Mammary epithelial cell (primary cell): ENCODE measurements at regions of chr11 and their contacts with region 1.

Region 1: DNA sequence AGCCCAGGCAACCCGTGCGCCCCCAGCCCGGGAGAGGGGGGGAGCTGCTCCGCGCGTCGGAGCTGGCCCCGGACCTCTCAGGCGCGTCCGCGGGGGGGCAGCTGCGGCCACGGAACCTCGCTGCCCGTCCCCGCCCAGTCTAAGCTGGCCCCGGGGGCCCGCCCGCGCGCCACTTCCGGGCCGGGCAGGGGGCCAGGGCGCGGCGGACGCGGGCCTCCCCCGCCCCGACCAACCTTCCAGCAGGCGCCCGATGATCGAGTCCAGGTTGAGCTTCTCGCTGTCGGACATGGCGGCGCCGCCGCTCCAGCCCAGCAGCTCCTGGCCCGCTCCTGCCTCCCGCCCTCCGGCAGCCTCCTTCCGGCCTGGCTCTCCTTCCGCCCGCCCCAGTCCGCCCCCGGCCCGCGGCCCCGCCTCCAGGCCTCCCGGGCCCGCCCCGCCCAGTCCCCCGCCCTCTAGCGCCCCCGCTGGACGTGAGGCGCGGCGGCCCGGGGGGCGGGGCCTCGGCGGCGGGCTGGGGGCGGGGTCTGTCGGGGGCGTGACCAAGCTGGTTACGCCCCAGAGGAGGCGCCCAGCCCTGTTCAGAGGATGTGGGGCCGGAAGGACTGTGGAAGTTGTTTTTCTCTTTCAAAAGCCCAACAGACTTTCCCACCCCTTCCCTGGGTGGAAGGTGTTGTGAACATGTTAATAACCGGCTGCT is at the start of gene PPP1CA:
- DNase-seq: peak; percentile 81
- H3K4me3 ChIP-seq: peak within 1 kb of the TSS; percentile 85 to 95 (median 89)
- H3K27ac ChIP-seq: peak within 1 kb of the TSS; percentile 58
- H3K4me1 ChIP-seq: peaks cover 17% of the 10 kb centered on the region
- H3K27me3 ChIP-seq: no peaks in the 10 kb centered on the region
- CTCF ChIP-seq: peak in 1 of 2 donors; percentile 29
- total RNA-seq, gene PPP1CA: 178 to 182 TPM

Region 2: DNA sequence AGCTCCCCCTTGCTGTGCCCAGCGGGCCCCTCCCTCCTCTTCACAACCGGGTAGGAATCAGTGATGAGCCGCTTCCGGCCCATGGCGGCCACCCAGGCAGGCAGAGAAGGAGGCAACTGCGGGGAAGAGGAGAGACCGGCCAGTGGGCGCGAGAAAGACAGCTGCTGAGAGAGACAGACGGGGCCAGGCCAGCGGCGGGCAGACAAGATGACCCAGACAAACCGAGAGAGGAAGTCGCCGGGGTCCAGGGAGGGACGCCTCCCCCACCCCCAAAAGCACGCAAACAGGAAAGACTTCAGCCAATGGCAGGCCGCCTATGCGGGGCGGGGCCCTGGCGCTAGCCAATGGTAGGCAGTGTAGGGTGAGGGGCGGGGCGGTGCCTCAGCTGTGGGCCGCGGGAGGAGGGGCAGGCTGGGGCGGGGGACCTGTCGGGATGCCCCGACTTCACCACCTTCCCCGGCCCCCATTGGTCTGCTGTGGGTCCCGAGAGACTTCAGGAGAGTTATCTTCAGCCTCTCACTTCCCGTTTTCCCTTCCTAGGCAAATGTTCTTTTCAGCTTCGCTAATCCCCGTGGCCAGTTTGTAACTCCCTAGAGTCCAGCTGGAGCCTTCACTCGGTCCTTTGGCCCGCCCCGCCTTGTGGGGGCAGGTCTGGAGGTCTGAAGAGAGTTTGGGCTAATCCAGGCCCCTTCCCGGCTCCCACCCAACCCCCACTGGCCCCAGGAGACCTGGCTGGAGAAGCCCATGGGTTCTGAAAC is 48.1 kb before region 1 on chr11 and contains the start of gene POLD4:
- CTCF ChIA-PET with region 1: no interaction called
- dilution Hi-C with region 1: no loop called
- in situ Hi-C with region 1: no loop called
- intact Hi-C with region 1: no loop called
- DNase-seq: peak; percentile 87
- H3K4me3 ChIP-seq: peak within 1 kb of the TSS; percentile 59 to 90 (median 73)
- H3K27ac ChIP-seq: peak within 1 kb of the TSS; percentile 78
- H3K4me1 ChIP-seq: peaks cover 62% of the 10 kb centered on the region
- H3K27me3 ChIP-seq: no peaks in the 10 kb centered on the region
- CTCF ChIP-seq: no peak
- total RNA-seq, gene POLD4: 39.2 to 75.2 TPM

Region 3: DNA sequence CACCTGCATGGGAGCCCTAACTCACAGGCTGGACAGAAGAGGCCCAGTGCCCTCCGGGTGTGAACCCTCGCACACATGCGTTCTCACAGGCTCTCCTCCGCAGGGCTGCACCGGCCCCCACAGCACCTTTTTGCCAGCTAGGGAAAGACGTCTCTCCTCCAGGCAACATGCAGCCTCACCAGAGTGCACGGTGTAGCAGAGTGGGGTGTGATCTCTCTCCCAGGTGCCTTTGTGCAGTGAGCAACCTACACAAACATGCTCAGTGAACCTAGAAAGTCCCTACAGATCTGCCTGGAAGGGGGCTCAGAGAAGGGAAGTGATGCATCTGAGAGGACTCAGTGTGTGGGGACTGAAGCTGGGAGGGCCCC is 10.1 kb after region 1 on chr11:
- CTCF ChIA-PET with region 1: no interaction called
- dilution Hi-C with region 1: no loop called
- in situ Hi-C with region 1: no loop called
- intact Hi-C with region 1: loop called (anchors 1 kb)
- DNase-seq: no peak
- H3K4me3 ChIP-seq: no peak overlapping the region
- H3K27ac ChIP-seq: no peak overlapping the region
- H3K4me1 ChIP-seq: no peaks in the 10 kb centered on the region
- H3K27me3 ChIP-seq: no peaks in the 10 kb centered on the region
- CTCF ChIP-seq: no peak

Region 4: GRCh38 chr11:67428052-67428914 is 26.6 kb after region 1 on chr11 and contains the start of gene RPS6KB2:
- CTCF ChIA-PET with region 1: no interaction called
- dilution Hi-C with region 1: no loop called
- in situ Hi-C with region 1: no loop called
- intact Hi-C with region 1: loop called (anchors 2 kb)
- DNase-seq: peak; percentile 95
- H3K4me3 ChIP-seq: peak within 1 kb of the TSS; percentile 62 to 72 (median 71)
- H3K27ac ChIP-seq: peak within 1 kb of the TSS; percentile 58
- H3K4me1 ChIP-seq: peaks cover 12% of the 10 kb centered on the region
- H3K27me3 ChIP-seq: no peaks in the 10 kb centered on the region
- CTCF ChIP-seq: no peak
- total RNA-seq, gene RPS6KB2: 35.7 to 62.3 TPM

Region 5: DNA sequence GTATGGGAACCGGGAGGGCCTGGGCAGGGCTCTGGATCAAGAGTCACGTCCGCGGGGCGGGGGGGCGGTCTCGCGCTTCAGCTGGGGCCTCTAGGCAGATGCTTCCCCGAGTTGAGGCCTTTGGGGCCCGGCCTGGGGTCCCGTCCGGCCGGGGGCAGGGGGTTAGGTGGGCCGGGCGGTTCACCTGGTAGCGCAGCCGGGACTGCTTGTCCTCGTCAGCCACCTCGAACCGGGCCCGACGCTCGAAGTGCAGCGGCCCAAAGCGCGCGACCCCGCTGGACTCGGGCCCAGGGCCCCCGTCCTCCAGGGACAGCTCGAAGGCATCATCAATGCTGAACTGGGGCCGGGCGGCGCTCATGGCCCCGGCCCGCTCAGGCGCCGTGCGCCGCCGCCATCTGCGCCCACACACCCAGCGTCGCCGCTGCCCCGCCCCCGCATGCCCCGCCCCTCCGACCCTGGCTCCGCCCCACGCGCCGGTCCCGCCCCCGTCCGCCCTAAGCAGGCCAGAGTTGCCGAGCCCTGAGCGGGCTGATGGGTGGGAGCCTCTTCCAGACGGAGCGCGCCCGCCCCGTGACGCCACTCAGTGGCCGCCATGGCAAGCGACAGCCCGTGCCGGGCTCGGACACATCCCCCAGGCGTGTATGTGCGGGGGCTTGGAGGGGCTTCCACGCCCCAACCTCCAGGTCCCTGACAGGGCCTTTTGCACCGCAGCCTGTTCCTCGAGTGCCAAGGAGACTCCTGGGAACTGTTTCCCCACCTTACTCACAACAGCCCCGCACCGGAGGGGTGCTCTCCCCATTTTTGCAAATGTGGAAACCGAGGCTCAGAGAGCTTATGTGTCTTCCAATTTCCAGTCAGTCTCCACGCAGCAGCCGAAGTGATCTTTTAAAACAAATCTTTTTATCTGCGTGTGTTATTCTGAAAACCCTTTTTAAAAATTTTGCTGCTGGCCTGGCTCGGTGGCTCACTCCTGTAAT is 67.5 kb after region 1 on chr11 and contains the start of gene TMEM134:
- CTCF ChIA-PET with region 1: interaction called, 4 read pairs
- dilution Hi-C with region 1: no loop called
- in situ Hi-C with region 1: no loop called
- intact Hi-C with region 1: loop called (anchors 2 kb)
- DNase-seq: peak; percentile 80
- H3K4me3 ChIP-seq: peak within 1 kb of the TSS; percentile 86 to 95 (median 92)
- H3K27ac ChIP-seq: peak within 1 kb of the TSS; percentile 71
- H3K4me1 ChIP-seq: peaks cover 20% of the 10 kb centered on the region
- H3K27me3 ChIP-seq: no peaks in the 10 kb centered on the region
- CTCF ChIP-seq: peak; percentile 24 to 53
- total RNA-seq, gene TMEM134: 55.3 to 69.4 TPM

Region 6: DNA sequence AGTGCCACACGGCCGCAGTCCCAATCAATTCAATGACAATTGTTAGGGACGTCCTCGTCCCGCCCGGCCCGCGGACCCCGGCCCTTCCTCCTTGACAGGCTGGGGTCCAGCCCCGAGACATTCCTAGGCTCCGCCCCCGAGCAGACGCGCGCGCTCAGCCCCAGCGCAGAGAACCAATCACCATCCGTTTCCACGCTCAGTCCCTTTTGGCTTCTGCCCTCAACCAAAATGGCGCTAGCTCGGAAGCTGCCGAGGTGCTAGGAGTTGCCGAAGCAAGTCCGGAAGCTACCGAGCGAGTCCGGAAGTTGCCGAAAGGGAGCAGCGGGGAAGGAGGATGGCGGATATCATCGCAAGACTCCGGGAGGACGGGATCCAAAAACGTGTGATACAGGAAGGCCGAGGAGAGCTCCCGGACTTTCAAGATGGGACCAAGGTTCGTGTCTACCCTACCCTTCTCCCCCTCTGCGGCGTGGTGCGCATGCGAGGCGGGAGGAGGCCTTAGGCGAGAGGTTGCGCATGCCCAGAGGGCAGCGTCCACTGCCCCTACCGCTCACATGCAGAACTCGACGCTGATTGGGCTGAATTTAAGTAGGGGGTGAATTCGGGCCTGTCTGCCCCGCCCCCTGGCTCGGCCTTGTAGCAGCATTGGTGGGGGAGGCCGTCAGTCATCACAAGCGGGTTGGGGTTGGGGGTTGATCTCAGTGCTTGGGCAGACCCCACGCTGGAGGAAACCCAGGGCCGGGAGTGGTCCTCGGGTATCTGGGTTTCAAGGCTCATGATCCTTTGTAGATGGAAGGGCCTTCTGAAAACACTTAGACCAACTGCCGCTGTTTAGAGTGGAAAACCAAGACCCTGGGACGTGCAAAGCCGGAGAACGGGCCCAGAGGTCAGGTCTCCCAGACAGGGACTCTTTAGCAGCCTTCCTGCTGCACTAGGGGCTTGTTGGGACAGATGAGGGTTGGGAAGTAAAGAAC is 81.5 kb after region 1 on chr11 and contains the start of gene AIP:
- CTCF ChIA-PET with region 1: interaction called, 4 read pairs
- dilution Hi-C with region 1: no loop called
- in situ Hi-C with region 1: no loop called
- intact Hi-C with region 1: loop called (anchors 5 kb)
- DNase-seq: peak; percentile 96
- H3K4me3 ChIP-seq: peak within 1 kb of the TSS; percentile 56 to 78 (median 73)
- H3K27ac ChIP-seq: peak within 1 kb of the TSS; percentile 66
- H3K4me1 ChIP-seq: peaks cover 12% of the 10 kb centered on the region
- H3K27me3 ChIP-seq: no peaks in the 10 kb centered on the region
- CTCF ChIP-seq: peak; percentile 5 to 34
- total RNA-seq, gene AIP: 34.5 to 36.2 TPM

Region 7: DNA sequence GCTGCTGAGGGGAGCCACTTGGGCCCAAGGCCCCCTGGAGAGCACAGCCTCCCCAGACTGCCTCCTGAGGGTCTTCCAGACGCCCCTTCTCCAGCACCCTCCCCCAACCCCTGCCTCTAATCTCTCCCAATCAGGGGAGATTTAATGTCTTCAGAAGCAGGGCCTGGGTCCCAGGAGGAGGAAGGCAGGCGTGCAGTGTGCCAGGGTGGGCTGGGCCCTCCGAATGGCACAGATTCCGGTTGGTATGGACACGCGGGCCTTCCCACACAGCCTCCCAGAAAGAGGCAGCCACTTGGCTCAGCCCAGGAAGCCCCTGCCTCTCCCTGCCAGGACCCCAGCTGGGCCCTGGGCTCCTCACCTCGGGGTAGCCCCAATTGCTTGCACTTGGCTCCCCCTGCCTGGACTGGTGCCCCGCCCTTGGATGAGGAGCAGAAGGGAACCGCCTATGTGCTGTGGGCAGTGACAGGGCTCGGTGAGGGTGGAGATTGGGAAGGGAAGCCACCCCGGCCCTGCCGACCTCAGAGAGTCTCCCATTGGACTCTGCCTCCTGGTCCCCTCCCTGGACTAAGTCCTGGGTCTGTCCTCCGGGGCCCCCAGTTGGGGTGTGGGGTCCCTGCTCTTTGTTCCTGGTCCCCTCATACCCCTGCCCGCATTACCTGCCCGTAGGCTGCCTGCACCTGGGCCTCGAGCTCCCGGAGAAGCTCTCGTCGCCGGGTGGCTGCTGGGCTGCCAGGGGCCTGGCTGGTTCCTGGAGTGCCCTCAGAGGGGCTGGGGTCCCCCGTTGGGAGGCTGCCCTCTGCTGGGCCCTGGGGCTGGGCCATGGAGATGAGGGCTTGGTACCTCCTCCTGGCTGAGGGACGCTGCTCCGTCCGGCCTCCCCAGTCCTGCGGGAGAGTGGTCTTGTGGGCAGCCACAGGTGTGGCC is 122.2 kb after region 1 on chr11:
- CTCF ChIA-PET with region 1: no interaction called
- dilution Hi-C with region 1: no loop called
- in situ Hi-C with region 1: no loop called
- intact Hi-C with region 1: no loop called
- DNase-seq: no peak
- H3K4me3 ChIP-seq: no peak overlapping the region
- H3K27ac ChIP-seq: no peak overlapping the region
- H3K4me1 ChIP-seq: no peaks in the 10 kb centered on the region
- H3K27me3 ChIP-seq: no peaks in the 10 kb centered on the region
- CTCF ChIP-seq: no peak

Region 8: DNA sequence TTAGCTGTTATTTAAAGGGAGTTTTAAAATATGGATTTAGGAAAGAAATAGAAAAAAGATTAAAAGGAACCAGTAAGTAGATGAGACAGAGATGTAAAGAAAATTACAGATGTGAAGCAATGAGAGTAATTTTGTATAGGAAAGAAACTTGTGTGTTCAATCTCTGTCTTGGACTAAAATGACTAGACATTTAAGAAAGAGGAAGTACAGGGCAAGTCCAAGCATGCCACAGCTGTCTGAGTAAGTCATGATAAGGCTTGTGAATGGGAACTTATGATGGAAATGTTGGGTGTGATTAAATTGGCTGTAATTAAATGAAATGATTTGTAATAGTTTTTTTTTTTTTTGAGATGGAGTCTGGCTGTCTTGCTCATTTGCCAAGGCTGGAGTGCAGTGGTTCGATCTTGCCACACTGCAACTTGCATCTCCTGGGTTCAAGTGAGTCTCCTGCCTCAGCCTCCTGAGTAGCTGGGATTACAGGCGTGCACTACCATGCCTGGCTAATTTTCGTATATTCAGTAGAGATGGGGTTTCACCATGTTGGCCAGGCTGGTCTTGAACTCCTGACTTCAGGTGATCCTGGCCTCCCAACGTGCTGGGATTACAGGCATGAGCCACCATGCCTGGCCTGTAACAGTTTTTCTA is 254.8 kb after region 1 on chr11:
- CTCF ChIA-PET with region 1: interaction called, 20 read pairs
- dilution Hi-C with region 1: no loop called
- in situ Hi-C with region 1: no loop called
- intact Hi-C with region 1: no loop called
- DNase-seq: peak; percentile 83
- H3K4me3 ChIP-seq: no peak overlapping the region
- H3K27ac ChIP-seq: peak overlapping the region; percentile 71
- H3K4me1 ChIP-seq: peaks cover 29% of the 10 kb centered on the region
- H3K27me3 ChIP-seq: no peaks in the 10 kb centered on the region
- CTCF ChIP-seq: no peak

Region 9: DNA sequence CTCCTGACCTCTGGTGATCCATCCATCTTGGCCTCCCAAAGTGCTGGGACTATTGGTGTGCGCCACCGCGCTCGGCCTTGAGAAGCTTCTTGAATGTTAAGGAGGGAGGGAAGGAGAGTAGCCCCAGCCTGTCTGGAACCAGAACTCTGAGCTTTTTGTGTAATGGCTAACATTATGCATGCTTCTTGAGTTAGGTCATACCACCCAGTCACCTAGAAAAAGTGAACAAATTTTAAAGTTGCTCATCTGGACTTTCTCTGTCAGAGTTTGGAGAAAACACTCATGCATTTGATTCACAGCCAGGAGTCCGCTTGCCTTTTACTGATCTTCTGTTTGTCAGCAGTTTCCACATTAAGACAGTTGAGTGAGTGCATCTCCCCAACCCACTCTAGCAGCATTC is 1141.0 kb after region 1 on chr11:
- CTCF ChIA-PET with region 1: no interaction called
- dilution Hi-C with region 1: no loop called
- in situ Hi-C with region 1: no loop called
- intact Hi-C with region 1: no loop called
- DNase-seq: peak; percentile 66
- H3K4me3 ChIP-seq: no peak overlapping the region
- H3K27ac ChIP-seq: no peak overlapping the region
- H3K4me1 ChIP-seq: peaks cover 16% of the 10 kb centered on the region
- H3K27me3 ChIP-seq: no peaks in the 10 kb centered on the region
- CTCF ChIP-seq: no peak